Ovary (tissue), 10 donors: ENCODE measurements at regions of chr19 and their contacts with region 1.

Region 1: GRCh38 chr19:17275461-17276175 is 6.1 kb upstream of the ANKLE1 start:
- DNase-seq: no peak
- H3K4me3 ChIP-seq: no peak overlapping the region
- H3K27ac ChIP-seq: no peak overlapping the region
- H3K4me1 ChIP-seq: no peaks in the 10 kb centered on the region
- H3K27me3 ChIP-seq: no peaks in the 10 kb centered on the region
- CTCF ChIP-seq: no peak
- EP300 ChIP-seq: no peak
- POLR2A ChIP-seq: no peak

Region 2: DNA sequence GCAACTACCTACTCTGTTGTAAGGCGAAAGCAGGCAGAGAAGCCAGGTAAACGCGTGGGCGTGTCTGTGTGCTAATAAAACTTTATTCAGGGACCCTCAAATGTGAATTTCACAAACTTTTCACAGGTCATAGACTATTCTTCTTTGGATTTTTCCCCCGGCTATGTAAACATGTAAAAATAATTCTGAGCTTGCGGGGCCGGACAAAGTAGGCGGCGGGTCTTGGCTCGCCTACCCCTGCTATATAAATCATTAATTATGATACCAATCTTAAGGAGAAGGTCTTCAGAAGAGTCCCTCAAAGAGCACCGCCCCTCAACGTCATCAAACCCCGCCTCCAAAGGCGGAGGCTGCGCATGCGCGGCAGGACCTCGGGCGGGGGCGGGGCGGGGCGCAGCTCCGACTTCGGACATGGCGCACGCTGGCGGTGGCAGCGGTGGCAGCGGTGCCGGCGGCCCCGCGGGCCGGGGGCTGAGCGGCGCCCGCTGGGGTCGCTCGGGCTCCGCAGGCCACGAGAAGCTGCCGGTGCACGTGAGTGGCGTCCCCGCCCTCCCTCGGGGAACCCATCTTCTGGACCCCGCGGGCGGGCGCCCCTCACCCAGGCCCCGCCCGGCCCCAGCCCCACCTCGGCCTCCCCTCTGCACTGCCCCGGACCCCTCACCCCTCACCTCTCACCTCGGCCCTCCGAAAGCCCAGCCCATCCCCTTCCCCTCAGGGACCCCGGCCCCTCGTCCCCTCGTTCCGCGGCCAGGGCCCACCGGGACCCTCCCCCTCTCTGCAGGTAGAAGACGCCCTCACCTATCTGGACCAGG is 446.4 kb before region 1 on chr19 and contains the start of gene SIN3B:
- intact Hi-C with region 1: loop called in 1 of 4 experiments (anchors 10 kb)
- DNase-seq: peak; percentile 80 to 93 (median 88)
- H3K4me3 ChIP-seq: peak within 1 kb of the TSS; percentile 79
- H3K27ac ChIP-seq: peak within 1 kb of the TSS; percentile 66 to 85
- H3K4me1 ChIP-seq: peaks cover 6% of the 10 kb centered on the region
- H3K27me3 ChIP-seq: no peaks in the 10 kb centered on the region
- CTCF ChIP-seq: no peak
- EP300 ChIP-seq: no peak
- POLR2A ChIP-seq: peak; percentile 46
- total RNA-seq, gene SIN3B: 45.1 to 92.0 (median 68.3) TPM

Region 3: GRCh38 chr19:17441241-17442021 is 165.8 kb after region 1 on chr19:
- intact Hi-C with region 1: no loop called
- DNase-seq: no peak
- H3K4me3 ChIP-seq: no peak overlapping the region
- H3K27ac ChIP-seq: peak overlapping the region; percentile 19 to 26
- H3K4me1 ChIP-seq: no peaks in the 10 kb centered on the region
- H3K27me3 ChIP-seq: no peaks in the 10 kb centered on the region
- CTCF ChIP-seq: peak in 1 of 3 donors; percentile 24
- EP300 ChIP-seq: no peak
- POLR2A ChIP-seq: no peak